ENCODE measurements at regions of chr1 and their contacts with region 1.

Region 1: DNA sequence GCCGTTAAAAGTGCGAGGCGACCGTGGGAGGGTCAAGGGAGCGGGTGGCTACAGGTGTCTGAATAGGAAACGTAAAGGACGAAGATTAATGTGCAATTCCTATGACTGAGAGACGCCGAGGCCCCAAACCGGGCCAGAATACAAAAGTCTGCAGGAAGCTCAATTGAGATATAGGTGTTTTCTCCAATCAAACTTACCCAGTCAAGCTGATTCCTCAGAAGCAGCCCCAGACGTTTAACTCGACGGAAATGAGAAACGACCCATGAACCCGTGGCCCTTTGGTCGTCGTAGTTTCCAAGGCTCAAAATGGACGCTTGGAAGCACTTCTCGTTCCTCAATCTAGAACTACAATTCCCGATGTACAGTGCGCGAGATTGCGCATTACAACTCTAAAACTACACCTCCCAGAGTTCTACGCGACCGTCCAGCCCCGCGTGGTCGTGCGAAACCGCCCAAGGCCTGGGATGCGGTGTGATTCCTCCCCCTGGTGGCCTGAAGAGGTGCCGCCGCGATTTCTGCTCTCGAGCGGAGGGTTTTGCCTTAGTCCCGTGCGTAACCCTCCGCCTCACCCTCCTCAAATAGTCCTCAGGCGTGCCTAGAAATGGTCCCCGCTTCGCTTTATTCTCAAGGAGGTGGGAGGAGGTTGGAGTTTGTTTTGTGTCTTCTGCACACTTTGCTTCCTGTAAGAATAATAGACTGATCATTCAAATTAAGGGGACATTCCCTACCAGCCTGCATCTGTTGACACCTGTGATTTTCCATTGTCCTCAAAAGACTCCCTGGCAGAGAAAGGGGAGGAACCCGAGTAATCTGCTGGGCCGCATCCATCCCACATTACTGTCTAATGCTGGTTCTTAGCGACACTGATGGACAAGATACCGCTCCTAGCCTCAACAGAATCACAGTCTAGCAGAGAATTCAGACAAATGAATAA is at the start of gene PAFAH2:
- DNase-seq: peak; percentile 95 to 99 (median 98)
- H3K4me3 ChIP-seq: peak within 1 kb of the TSS; percentile 67 to 86
- H3K4me3 Mint-ChIP-seq: peak within 1 kb of the TSS; percentile 92 to 96 (median 94)
- H3K27ac ChIP-seq: peak within 1 kb of the TSS; percentile 84
- H3K27ac Mint-ChIP-seq: peak within 1 kb of the TSS; percentile 97 to 99 (median 98)
- H3K4me1 ChIP-seq: peaks cover 29% of the 10 kb centered on the region
- H3K4me1 Mint-ChIP-seq: peaks cover 21 to 31% (median 28%) of the 10 kb centered on the region in 4 donors
- H3K27me3 ChIP-seq: no peaks in the 10 kb centered on the region
- H3K27me3 Mint-ChIP-seq: no peaks in the 10 kb centered on the region
- total RNA-seq, gene PAFAH2: 18.3 to 20.0 TPM

Region 2: DNA sequence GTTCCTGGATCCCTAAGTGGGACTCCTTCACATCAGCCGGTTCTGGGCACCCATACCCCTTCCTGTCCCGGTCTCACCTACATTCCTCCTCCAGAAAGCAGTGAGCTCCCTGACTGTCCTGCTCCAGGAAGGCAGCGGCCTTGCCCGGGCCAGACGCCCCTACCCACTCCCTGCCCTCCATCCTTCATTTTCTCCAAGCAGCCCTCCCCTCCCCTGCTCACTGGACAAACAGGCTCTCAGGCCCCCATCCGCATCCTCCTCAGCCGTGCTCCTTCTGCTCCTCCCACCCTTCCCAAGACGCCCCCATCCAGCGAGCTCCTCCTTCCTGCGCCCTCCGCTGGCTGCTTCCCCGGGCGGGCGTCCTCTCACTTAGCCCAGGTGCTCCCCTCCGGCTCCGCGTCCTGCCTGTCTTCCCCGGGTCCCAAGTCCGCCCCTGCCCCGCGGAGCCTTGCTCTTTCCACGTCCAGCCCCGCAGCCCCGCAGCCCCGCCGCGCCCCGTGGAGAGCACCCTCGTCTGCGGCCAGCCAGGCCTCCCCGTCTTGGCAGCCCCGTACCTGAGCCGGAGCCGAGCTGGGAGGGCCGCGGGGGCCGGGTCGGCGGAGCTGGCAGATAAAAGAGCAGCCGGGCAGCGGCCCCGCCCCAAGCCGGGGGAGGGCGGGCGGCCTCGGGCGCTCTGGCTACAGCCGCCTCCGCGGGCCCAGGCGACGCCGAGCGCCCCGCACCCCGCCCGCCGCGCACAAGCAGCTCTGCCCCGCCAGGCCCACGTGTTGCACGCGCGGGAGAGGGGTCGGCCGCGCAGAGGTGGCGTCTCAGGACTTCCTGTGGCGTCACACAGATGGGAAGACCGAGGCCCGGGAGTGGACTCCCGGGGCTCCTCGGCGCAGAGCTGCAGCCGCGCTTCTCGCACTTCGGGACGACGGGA is 122.9 kb before region 1 on chr1 and contains the start of gene PAQR7:
- CTCF ChIA-PET with region 1: interaction called, 3 read pairs
- POLR2A ChIA-PET with region 1: interaction called, 11 read pairs
- intact Hi-C with region 1: no loop called
- DNase-seq: peak; percentile 55 to 65 (median 59)
- H3K4me3 ChIP-seq: peak within 1 kb of the TSS in 1 of 2 donors; percentile 51
- H3K4me3 Mint-ChIP-seq: peak within 1 kb of the TSS; percentile 80 to 88 (median 84)
- H3K27ac ChIP-seq: peak within 1 kb of the TSS; percentile 17
- H3K27ac Mint-ChIP-seq: peak within 1 kb of the TSS; percentile 13 to 89 (median 73)
- H3K4me1 ChIP-seq: peaks cover 10% of the 10 kb centered on the region
- H3K4me1 Mint-ChIP-seq: peaks cover 4 to 13% (median 6%) of the 10 kb centered on the region in 4 donors
- H3K27me3 ChIP-seq: no peaks in the 10 kb centered on the region
- H3K27me3 Mint-ChIP-seq: no peaks in the 10 kb centered on the region
- total RNA-seq, gene PAQR7: 2.1 to 2.6 TPM

Region 3: DNA sequence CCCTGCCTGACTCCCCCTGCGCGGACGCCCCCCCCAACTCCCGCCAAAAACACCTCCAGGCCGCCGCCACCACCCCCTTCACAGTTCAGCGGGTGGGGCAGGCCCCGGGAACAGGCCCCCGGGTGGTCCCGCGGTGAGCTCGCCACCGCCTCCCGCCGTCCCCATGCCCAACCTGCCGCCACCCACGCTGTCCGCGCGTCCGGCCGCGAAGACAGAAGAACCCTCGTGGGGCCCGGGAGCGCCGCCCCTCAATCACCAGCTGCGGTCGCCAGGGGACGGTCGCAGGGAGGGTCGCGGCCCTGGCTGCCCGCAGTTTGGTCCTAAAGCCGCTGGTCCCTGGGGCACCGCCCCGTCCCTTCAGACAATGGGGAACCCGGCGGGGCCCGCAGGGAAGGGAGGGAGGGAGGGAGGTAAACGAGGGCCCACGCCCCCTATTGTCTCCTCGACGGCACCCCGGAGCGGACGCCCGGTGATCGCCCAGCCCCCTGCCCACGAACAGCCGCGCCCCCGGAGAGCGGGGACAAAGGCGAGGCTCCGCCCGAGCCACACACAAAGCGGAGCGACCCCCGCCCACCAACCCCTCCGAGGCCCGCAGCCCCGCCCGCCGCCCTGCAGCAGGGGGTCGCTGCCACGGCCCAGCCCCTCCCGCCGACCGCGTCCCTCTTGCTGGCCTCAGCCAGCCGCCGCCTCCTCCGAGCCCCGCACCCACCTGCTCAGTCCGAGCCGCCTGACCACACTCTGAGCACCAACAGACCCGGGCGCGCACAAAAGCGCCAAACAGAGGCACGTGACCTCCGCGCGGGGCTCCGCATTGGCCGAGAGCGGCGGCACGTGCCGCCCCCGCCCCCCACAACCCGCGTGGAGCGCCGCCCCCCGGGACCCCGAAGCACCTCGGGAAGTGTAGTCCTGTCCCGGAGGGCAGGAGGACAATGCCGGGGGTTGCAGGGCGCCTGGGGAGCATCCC is 92.1 kb before region 1 on chr1 and contains the start of gene STMN1:
- CTCF ChIA-PET with region 1: interaction called, 583 read pairs
- POLR2A ChIA-PET with region 1: interaction called, 73 read pairs
- intact Hi-C with region 1: loop called (anchors 1 kb)
- DNase-seq: peak; percentile 74 to 88 (median 77)
- H3K4me3 ChIP-seq: peak within 1 kb of the TSS; percentile 71 to 93
- H3K4me3 Mint-ChIP-seq: peak within 1 kb of the TSS; percentile 89 to 96 (median 92)
- H3K27ac ChIP-seq: peak within 1 kb of the TSS; percentile 54
- H3K27ac Mint-ChIP-seq: peak within 1 kb of the TSS; percentile 87 to 98 (median 96)
- H3K4me1 ChIP-seq: peaks cover 26% of the 10 kb centered on the region
- H3K4me1 Mint-ChIP-seq: peaks cover 14 to 31% (median 21%) of the 10 kb centered on the region in 4 donors
- H3K27me3 ChIP-seq: no peaks in the 10 kb centered on the region
- H3K27me3 Mint-ChIP-seq: no peaks in the 10 kb centered on the region
- total RNA-seq, gene STMN1: 34.5 to 37.1 TPM

Region 4: DNA sequence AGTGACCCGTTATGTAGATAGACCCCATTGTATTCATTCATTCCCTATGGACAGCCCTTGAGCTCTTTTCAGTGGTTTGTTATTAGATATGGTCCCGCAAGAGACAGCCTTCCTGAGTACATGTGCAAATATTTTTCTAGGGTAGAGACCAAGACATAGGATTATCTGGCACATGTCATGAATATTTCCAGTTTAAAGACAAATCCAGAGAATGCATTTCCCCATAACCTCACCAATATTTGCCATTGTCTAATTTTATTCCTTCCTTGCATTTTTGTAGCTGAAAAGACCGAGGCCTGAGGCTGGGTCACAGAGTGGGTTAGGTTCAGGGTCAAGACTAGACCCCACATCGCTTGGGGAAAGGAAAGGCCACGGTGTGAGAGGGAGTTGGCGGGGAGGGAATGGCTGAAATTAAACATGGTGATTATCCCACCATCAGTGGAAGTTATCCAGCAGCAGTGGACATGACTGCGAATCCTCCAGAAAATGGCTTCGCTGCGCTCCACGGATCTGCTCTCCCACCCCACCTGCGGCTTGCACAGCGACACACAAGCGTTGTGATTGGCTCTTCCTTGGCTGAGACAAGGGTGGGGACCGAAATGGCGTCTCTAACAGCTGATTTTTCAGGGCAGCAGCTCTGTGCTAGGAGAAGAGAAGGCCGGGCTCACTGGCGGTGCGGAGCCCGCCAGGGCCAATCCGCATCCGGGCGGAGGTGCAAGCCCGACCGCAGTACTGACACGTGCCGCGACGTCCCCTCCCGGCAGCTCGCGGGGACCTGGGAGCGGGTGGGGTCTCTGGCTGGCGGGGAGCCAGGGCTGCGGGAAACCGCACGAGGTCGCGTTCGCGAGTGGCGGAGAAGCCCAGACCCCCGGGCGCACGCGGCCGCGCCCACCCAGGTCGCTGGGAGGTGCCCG is 75.8 kb before region 1 on chr1:
- CTCF ChIA-PET with region 1: interaction called, 19 read pairs
- POLR2A ChIA-PET with region 1: interaction called, 23 read pairs
- intact Hi-C with region 1: no loop called
- DNase-seq: peak; percentile 46 to 60 (median 57)
- H3K4me3 ChIP-seq: peak overlapping the region; percentile 17 to 54
- H3K4me3 Mint-ChIP-seq: peak overlapping the region; percentile 85 to 92 (median 88)
- H3K27ac ChIP-seq: no peak overlapping the region
- H3K27ac Mint-ChIP-seq: peak overlapping the region; percentile 49 to 90 (median 65)
- H3K4me1 ChIP-seq: peaks cover 36% of the 10 kb centered on the region
- H3K4me1 Mint-ChIP-seq: peaks cover 19 to 33% (median 23%) of the 10 kb centered on the region in 4 donors
- H3K27me3 ChIP-seq: no peaks in the 10 kb centered on the region
- H3K27me3 Mint-ChIP-seq: peaks cover 2 to 3% of the 10 kb centered on the region in 2 donors

Region 5: DNA sequence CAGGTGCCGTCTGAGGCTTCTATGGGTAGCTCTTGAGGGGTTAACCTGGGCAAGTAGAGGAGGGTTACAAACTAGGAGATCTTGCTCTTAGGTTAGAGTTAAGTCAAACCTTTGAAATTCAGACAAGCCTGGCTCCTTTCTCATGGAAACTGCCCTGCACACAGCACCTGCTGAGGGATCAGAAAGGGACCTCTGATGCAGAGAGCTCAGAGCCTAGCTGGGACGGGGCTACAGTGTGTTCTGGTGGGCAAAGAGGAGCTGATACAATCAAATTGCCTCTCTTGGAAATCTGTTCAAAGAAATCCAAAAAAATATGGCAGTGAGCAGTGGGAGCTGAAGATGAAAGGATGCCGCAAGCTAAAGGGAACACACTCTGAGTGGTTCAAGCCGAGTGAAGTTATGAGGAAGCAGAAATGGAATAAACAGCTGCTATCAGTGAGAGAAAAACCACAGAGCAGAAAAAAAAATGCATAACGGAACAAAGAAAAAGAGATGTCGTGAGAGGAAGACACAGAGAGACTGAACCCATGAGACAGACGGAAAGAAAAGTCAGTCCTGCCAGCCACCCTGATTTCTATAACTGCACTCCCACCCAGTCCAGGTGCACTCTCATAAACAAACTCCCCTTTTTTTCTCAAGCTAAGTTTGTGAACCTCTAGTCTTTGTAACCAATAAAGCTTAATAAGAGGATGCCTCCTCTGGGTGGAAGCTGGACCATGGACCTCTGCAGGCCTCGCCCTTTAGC is 26.9 kb before region 1 on chr1:
- CTCF ChIA-PET with region 1: interaction called, 17 read pairs
- POLR2A ChIA-PET with region 1: interaction called, 43 read pairs
- intact Hi-C with region 1: loop called (anchors 1 kb)
- DNase-seq: peak; percentile 24 to 48 (median 40)
- H3K4me3 ChIP-seq: no peak overlapping the region
- H3K4me3 Mint-ChIP-seq: peak overlapping the region; percentile 14 to 77 (median 59)
- H3K27ac ChIP-seq: peak overlapping the region; percentile 50
- H3K27ac Mint-ChIP-seq: peak overlapping the region; percentile 49 to 90 (median 80)
- H3K4me1 ChIP-seq: peaks cover 13% of the 10 kb centered on the region
- H3K4me1 Mint-ChIP-seq: peaks cover 29 to 32% (median 31%) of the 10 kb centered on the region in 4 donors
- H3K27me3 ChIP-seq: no peaks in the 10 kb centered on the region
- H3K27me3 Mint-ChIP-seq: no peaks in the 10 kb centered on the region

Region 6: GRCh38 chr1:26035959-26036755 is 38.1 kb after region 1 on chr1:
- CTCF ChIA-PET with region 1: interaction called, 3 read pairs
- POLR2A ChIA-PET with region 1: no interaction called
- intact Hi-C with region 1: loop called (anchors 2 kb)
- DNase-seq: peak; percentile 67 to 81 (median 69)
- H3K4me3 ChIP-seq: peak overlapping the region; percentile 48 to 84
- H3K4me3 Mint-ChIP-seq: peak overlapping the region; percentile 94 to 99 (median 95)
- H3K27ac ChIP-seq: peak overlapping the region; percentile 77
- H3K27ac Mint-ChIP-seq: peak overlapping the region; percentile 89 to 97 (median 95)
- H3K4me1 ChIP-seq: peaks cover 15% of the 10 kb centered on the region
- H3K4me1 Mint-ChIP-seq: peaks cover 2 to 21% (median 11%) of the 10 kb centered on the region in 4 donors
- H3K27me3 ChIP-seq: no peaks in the 10 kb centered on the region
- H3K27me3 Mint-ChIP-seq: peaks cover 2 to 3% of the 10 kb centered on the region in 2 donors

Region 7: DNA sequence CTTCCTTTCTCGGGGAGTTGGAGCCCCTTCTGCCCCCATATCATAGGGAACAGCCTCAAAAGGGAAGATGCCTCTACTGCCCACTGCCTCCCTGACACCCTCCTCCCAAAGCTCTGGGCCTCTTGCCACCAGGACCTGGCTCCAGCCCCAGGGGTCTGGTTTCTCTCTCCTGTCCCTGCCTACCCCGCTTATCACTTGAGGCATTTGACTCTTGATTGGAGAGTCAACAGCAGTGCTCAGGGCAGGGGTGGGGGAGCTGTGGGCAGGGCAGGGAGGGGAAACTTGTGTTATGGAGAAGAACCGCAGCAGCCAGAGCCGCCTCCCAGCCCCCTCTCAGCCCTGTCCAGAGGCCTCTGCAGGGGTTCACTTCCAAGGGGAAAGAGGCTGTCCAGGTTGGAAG is 68.8 kb after region 1 on chr1:
- CTCF ChIA-PET with region 1: no interaction called
- POLR2A ChIA-PET with region 1: no interaction called
- intact Hi-C with region 1: no loop called
- DNase-seq: no peak
- H3K4me3 ChIP-seq: no peak overlapping the region
- H3K4me3 Mint-ChIP-seq: no peak overlapping the region
- H3K27ac ChIP-seq: no peak overlapping the region
- H3K27ac Mint-ChIP-seq: no peak overlapping the region
- H3K4me1 ChIP-seq: no peaks in the 10 kb centered on the region
- H3K4me1 Mint-ChIP-seq: no peaks in the 10 kb centered on the region
- H3K27me3 ChIP-seq: no peaks in the 10 kb centered on the region
- H3K27me3 Mint-ChIP-seq: peaks cover 5 to 20% of the 10 kb centered on the region in 2 donors

Region 8: DNA sequence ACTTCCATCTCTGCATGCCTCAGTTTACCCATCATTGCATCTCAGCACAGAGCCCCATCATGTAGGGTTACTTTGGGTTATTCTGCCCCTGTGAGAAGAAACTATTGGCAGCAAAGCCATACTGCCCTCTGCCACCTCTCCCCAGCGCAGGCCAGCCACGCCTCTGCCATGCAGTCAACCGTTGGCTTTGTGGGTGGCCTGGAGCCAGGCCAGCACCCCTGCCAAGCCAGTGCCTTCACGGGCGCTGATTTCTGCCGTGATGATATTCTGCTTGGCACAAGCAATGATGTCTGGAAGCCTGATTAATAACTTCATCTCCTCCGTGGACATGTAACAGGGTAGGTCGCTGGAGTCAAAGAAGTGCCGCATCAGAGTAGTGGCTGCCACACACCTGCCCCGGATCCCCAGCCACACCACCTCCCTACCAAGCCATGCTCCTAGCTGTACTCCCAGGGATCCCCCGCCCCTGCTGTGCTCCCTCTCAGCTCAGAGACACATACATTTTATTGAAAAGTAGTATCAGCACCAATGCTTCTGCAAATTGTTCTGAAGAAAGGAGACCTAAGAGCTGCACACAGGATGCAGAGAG is 220.9 kb after region 1 on chr1:
- CTCF ChIA-PET with region 1: no interaction called
- POLR2A ChIA-PET with region 1: no interaction called
- intact Hi-C with region 1: no loop called
- DNase-seq: no peak
- H3K4me3 ChIP-seq: no peak overlapping the region
- H3K4me3 Mint-ChIP-seq: no peak overlapping the region
- H3K27ac ChIP-seq: no peak overlapping the region
- H3K27ac Mint-ChIP-seq: no peak overlapping the region
- H3K4me1 ChIP-seq: no peaks in the 10 kb centered on the region
- H3K4me1 Mint-ChIP-seq: peaks cover 0 to 2% (median 0%) of the 10 kb centered on the region in 4 donors
- H3K27me3 ChIP-seq: no peaks in the 10 kb centered on the region
- H3K27me3 Mint-ChIP-seq: peaks cover 0 to 3% of the 10 kb centered on the region in 2 donors